Caco-2 (cell line): ENCODE measurements at regions of chr2 and their contacts with region 1.

Region 1: DNA sequence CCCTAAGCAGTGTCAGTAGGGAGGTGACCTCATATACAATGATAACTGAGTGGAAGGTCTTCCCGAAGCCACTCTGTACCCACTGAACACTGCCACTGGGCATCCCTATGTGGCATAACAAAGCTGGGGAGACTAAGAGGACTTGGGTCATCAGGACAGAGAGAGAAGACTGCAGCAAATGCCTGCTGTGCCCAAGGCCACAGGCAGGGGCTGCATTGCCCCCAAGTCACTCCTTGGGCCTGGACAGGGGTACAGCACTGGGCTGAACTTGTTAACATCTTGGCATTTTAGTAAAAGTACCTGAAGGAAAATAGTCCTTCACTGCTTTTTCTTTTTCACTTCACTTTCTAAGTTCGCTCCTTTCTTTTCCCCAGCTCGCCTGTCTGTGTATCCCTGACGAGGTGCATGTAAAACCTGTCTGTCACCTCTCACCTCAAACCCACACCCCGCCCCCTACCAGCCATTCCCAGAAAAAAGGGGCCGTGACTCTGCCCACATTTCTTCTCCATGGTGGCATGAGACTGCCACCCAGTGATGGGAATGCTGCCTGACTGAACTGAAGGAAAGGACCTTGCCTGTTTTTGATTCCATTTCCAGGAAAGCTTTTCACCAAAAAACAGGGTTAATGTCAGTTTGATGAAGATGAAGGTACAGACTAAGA is 62.9 kb downstream of the MTHFD2 start:
- DNase-seq: peak; percentile 65 to 79
- H3K4me3 ChIP-seq: no peak overlapping the region
- H3K4me3 Mint-ChIP-seq: no peak overlapping the region
- H3K27ac Mint-ChIP-seq: no peak overlapping the region
- H3K4me1 ChIP-seq: no peaks in the 10 kb centered on the region
- H3K4me1 Mint-ChIP-seq: peaks cover 5% of the 10 kb centered on the region
- H3K27me3 ChIP-seq: no peaks in the 10 kb centered on the region
- H3K27me3 Mint-ChIP-seq: no peaks in the 10 kb centered on the region
- CTCF ChIP-seq: peak; percentile 41 to 61

Region 2: DNA sequence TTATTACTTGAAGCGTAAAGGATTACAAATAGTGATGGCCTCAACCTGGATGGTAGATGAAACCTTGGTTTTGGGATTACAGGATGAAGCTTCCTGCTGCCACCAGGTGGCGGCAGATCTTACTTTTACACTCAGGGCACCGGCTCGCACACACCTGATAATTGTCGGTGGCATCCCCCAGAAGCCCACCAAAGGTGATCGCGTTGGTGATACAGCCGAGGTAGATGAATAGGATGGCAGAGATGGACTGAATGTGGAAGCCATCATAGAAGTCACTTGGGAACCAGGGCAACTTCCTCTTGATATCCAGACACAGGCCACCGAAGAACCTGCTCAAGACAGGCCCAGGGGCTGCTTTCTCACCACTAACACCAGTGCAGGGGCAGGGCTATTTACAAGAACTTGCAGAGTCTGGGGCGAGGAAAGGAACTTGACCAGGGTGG is 11.1 kb before region 1 on chr2:
- CTCF ChIA-PET with region 1: interaction called, 9 read pairs
- POLR2A ChIA-PET with region 1: no interaction called
- intact Hi-C with region 1: loop called (anchors 1 kb)
- DNase-seq: peak; percentile 44 to 55
- H3K4me3 ChIP-seq: no peak overlapping the region
- H3K4me3 Mint-ChIP-seq: no peak overlapping the region
- H3K27ac Mint-ChIP-seq: no peak overlapping the region
- H3K4me1 ChIP-seq: no peaks in the 10 kb centered on the region
- H3K4me1 Mint-ChIP-seq: no peaks in the 10 kb centered on the region
- H3K27me3 ChIP-seq: no peaks in the 10 kb centered on the region
- H3K27me3 Mint-ChIP-seq: no peaks in the 10 kb centered on the region
- CTCF ChIP-seq: peak; percentile 85 to 86

Region 3: GRCh38 chr2:74317701-74318301 is 56.5 kb after region 1 on chr2:
- CTCF ChIA-PET with region 1: no interaction called
- POLR2A ChIA-PET with region 1: no interaction called
- intact Hi-C with region 1: no loop called
- DNase-seq: no peak
- H3K4me3 ChIP-seq: no peak overlapping the region
- H3K4me3 Mint-ChIP-seq: no peak overlapping the region
- H3K27ac Mint-ChIP-seq: no peak overlapping the region
- H3K4me1 ChIP-seq: peaks cover 6% of the 10 kb centered on the region; the same call in 1 of the 2 replicates
- H3K4me1 Mint-ChIP-seq: no peaks in the 10 kb centered on the region
- H3K27me3 ChIP-seq: no peaks in the 10 kb centered on the region
- H3K27me3 Mint-ChIP-seq: no peaks in the 10 kb centered on the region
- CTCF ChIP-seq: no peak